Tibial artery (tissue), 4 donors: ENCODE measurements at regions of chr1 and their contacts with region 1.

Region 1: DNA sequence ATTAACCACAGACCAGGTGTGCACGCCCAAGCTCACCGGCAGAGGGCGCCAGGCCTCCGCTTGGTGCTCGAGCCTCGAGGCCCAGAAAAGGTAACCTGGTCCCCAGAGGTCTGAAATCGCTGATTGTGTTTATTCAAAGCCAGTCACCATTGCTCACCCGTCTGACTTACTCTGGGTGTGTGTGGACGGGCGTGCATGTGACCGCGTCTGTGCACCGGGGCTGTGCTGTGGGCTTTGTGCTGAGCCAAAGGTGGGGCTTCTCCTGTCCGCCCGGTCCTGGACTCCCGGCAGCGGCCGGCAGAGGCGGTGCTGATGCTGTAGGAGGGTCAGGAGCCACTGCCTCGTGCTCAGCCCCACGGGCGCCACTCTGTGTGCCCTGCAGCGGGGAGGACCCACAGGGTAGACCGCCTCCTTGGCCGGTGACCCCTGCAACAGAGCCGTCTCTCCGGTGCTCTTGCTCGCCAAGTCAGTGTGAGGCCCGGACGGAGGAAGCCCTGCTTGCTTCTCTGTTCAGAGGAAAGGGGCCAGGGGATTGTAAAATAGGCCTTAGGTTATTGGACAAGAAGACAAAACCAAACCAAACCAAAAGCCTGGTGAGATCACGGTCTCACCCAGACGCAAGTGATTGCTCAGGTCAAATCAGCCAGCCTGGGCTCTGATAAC is 32.0 kb upstream of the BTG2 start:
- DNase-seq: peak; percentile 94 to 96
- H3K4me3 ChIP-seq: peak overlapping the region; percentile 24 to 36
- H3K27ac ChIP-seq: peak overlapping the region; percentile 84 to 88
- H3K4me1 ChIP-seq: peaks cover 0 to 58% (median 45%) of the 10 kb centered on the region in 4 donors
- H3K27me3 ChIP-seq: no peaks in the 10 kb centered on the region
- CTCF ChIP-seq: peak; percentile 95 to 99

Region 2: DNA sequence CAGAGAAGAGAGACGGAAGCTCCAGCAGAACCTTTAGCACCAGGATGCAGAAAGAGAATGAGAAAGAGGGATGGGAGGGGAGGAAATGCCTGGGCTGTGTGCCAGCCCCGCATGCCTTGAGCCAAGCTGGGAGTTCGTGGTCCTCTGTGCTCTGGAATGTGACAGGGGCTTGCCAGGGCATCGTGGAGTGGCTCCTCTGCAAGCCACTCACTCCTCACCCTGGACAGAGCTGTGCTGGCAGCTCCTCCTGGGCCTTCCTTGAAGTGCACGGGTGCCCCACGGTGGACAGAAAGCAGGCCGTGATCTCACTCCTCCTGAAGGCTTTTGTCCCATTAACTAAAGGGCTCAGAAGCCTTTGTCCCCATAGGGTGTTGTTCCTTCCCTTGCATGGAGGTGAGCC is 167.4 kb after region 1 on chr1:
- intact Hi-C with region 1: loop called (anchors 5 kb)
- DNase-seq: peak; percentile 91 to 92
- H3K4me3 ChIP-seq: no peak overlapping the region
- H3K27ac ChIP-seq: peak overlapping the region; percentile 81 to 85
- H3K4me1 ChIP-seq: peaks cover 0 to 40% (median 26%) of the 10 kb centered on the region in 4 donors
- H3K27me3 ChIP-seq: no peaks in the 10 kb centered on the region
- CTCF ChIP-seq: peak; percentile 83 to 88

Region 3: DNA sequence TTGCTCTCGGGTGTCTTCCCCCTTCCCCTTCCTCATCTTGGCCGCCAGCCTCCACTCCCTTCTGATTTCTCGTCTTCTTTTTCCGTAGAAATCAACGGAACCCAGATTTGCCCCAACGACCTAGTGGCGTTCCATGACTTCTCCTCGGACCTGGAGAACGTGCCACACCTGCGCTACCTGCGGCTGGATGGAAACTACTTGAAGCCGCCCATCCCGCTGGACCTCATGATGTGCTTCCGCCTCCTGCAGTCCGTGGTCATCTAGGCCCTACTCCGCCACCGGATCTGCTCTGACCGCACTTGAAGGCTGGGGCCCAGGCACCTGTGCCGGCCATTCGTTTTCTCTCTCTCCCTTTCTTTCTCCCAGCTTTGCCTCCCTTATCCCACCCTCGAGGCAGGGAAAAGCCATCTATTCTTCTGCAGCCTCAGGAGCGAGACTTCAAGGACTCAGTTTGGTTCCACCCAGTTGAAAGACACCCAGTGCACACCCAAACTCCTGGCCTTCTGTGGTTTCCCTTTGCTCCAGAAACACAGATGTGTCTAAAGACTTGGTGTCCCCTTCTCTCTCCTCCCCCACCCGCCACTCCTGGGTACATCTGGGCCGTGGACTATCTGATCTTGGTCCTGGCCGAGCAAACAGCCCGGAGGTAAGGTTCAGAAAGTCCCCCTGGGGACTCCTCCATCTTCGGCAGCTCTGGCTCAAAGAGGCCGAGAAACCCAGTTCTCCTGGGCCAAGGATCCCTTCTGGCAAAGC is 213.5 kb after region 1 on chr1:
- intact Hi-C with region 1: loop called (anchors 5 kb)
- DNase-seq: no peak
- H3K4me3 ChIP-seq: peak overlapping the region; percentile 11 to 39
- H3K27ac ChIP-seq: peak overlapping the region; percentile 68 to 73
- H3K4me1 ChIP-seq: peaks cover 0 to 66% (median 53%) of the 10 kb centered on the region in 4 donors
- H3K27me3 ChIP-seq: no peaks in the 10 kb centered on the region
- CTCF ChIP-seq: no peak

Region 4: GRCh38 chr1:203504397-203505250 is 231.3 kb after region 1 on chr1:
- intact Hi-C with region 1: no loop called
- DNase-seq: peak; percentile 88 to 89
- H3K4me3 ChIP-seq: no peak overlapping the region
- H3K27ac ChIP-seq: no peak overlapping the region
- H3K4me1 ChIP-seq: peaks cover 0 to 36% (median 14%) of the 10 kb centered on the region in 4 donors
- H3K27me3 ChIP-seq: no peaks in the 10 kb centered on the region
- CTCF ChIP-seq: peak; percentile 83 to 89